ENCODE measurements at regions of chr5 and their contacts with region 1.

Region 1: DNA sequence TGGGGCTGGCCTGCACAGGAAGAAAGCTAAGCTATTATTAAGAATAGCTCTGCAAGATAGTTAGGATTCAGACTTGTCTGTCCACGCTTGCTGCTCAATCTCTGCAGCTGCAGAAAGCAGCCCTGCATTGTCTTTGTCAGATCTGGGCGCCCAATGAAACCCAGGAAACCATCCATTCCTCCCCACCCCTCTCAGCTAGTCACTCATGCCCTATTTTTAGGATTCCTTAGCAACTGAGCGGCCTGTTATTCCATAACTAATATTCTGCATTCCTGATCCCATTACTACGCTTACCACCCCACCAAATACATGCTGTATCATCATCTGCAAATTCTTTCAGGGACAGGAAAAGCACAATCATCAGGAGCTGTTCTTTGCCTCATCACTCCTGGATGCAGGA is 52.9 kb upstream of the APC start:
- DNase-seq: peak in 4 of 5 donors; percentile 40 to 49 (median 42)
- ATAC-seq: peak; percentile 93 to 96 (median 95)
- H3K4me3 ChIP-seq: no peak overlapping the region
- H3K27ac ChIP-seq: peak overlapping the region; percentile 1 to 82 (median 58)
- H3K4me1 ChIP-seq: peaks cover 0 to 37% (median 17%) of the 10 kb centered on the region in 12 donors
- H3K27me3 ChIP-seq: no peaks in the 10 kb centered on the region
- CTCF ChIP-seq: no peak
- POLR2A ChIP-seq: no peak

Region 2: GRCh38 chr5:112640546-112640945 is 44.2 kb before region 1 on chr5:
- intact Hi-C with region 1: loop called in 1 of 10 experiments (anchors 5 kb)
- DNase-seq: no peak
- ATAC-seq: no peak
- H3K4me3 ChIP-seq: no peak overlapping the region
- H3K27ac ChIP-seq: no peak overlapping the region
- H3K4me1 ChIP-seq: peaks cover 0 to 48% (median 9%) of the 10 kb centered on the region in 12 donors
- H3K27me3 ChIP-seq: no peaks in the 10 kb centered on the region
- CTCF ChIP-seq: no peak
- POLR2A ChIP-seq: no peak

Region 3: DNA sequence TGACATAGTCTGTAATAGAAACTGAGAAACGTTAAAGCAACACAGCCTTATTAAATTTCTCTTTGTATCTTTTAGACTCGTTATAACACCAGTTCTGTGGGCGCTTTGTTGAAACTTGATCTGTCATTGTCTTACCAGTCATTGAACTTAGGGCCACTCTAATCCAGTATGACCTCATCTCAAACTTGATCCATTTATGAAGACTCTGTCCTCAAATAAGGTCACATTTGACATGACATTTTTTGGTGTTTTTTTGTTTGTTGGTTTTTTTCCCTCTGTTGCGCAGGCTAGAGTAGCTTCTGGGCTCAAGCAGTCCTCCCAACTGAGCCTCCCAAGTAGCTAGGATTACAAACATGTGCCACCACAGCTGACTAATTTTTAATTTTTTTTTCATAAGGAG is 58.9 kb after region 1 on chr5:
- intact Hi-C with region 1: loop called in 1 of 10 experiments (anchors 2 kb)
- DNase-seq: no peak
- ATAC-seq: no peak
- H3K4me3 ChIP-seq: no peak overlapping the region
- H3K27ac ChIP-seq: no peak overlapping the region
- H3K4me1 ChIP-seq: peaks cover 0 to 30% (median 9%) of the 10 kb centered on the region in 12 donors
- H3K27me3 ChIP-seq: no peaks in the 10 kb centered on the region
- CTCF ChIP-seq: no peak
- POLR2A ChIP-seq: no peak

Measured in heart left ventricle (tissue), 16 donors.